ENCODE measurements at regions of chr21 and their contacts with region 1.

Region 1: DNA sequence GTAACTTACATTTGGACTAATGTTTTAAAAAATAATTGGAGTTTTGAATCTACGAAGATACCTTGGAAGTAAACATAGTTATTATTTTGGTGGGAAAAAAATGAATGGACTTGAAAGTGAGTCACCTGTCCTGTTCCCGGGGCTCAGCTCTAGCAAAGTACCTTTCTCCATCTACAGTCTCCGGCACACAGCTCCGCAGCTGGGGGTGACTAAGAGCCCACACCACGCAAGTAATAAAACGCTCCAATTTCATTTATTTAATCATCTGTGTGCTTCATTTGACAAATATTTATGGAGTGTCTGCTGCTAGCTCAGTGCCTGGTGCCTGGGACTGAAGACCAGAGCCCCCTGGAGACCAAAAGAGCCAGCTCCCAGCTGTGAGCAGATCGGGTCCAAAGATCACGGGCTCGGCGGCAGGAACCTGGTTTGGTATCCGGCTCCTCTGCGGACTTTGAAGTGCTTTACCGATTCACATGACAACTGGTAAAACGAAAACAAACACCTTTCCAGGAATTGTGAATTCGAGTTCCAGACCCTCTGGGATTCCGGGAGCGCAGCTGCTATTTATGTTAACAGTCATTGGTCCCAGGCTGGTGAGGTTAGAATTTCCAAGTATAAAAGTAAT is 1.7 kb upstream of the RIPK4 start:
- DNase-seq: peak; percentile 97
- ATAC-seq: peak; percentile 67
- H3K4me3 ChIP-seq: peak overlapping the region; percentile 94
- H3K27ac ChIP-seq: peak overlapping the region; percentile 97
- H3K4me1 ChIP-seq: peaks cover 29% of the 10 kb centered on the region
- H3K27me3 ChIP-seq: no peaks in the 10 kb centered on the region
- CTCF ChIP-seq: peak; percentile 75

Region 2: GRCh38 chr21:41507496-41508299 is 260.9 kb before region 1 on chr21 and contains the start of gene TMPRSS2:
- CTCF ChIA-PET with region 1: no interaction called
- POLR2A ChIA-PET with region 1: no interaction called
- intact Hi-C with region 1: loop called (anchors 5 kb)
- DNase-seq: peak; percentile 68
- ATAC-seq: peak; percentile 80
- H3K4me3 ChIP-seq: peak within 1 kb of the TSS; percentile 83
- H3K27ac ChIP-seq: peak within 1 kb of the TSS; percentile 12; the same call in 1 of the 2 replicates
- H3K4me1 ChIP-seq: peaks cover 24% of the 10 kb centered on the region
- H3K27me3 ChIP-seq: no peaks in the 10 kb centered on the region
- CTCF ChIP-seq: no peak
- total RNA-seq, gene TMPRSS2: 9.3 and 15.8 TPM in 2 replicates

Region 3: DNA sequence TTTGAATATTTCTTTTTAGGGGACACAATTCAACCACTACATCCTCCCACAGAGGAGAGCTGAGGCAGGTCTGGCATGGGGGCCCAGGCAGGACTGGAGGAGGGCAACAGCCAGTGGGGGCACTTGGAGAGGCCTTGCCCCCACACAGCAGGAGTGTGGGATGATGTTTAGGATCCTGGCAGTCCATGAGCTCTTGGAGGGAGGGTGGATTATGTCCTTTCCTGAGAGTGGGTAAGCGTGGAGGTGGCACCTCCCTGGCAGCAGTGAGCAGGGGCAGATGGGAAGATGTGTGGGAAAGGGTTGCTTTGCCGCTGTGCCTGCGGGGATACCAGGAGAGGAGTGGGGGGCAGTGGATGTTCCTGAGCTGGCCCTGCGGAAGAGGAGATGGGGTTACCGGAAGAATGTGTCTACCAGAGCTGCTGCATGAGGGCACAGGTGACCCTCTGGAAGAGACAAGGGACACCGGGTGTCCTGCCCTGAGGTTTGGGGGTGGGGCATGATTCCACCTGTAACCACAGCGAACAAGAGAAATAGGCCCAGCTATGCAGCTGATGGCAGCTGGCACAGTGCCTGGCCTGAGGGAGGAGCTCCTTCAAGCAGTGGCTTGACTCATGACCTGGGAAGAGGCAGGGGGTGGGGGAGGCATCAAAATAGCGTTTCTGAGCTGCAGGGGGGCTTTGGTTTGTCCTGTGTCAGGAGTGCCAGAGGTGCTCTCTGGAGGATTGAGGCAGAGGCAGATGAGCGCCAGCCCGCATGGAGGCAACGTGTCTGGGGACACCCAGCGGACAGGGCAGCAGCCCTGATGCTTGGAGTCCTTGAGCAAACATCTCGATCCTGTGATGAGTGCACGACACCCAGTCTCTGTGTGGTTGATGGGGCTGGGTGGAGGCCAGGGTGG is 136.7 kb before region 1 on chr21:
- CTCF ChIA-PET with region 1: no interaction called
- POLR2A ChIA-PET with region 1: interaction called, 19 read pairs
- intact Hi-C with region 1: loop called (anchors 2 kb)
- DNase-seq: peak; percentile 96
- ATAC-seq: peak; percentile 35
- H3K4me3 ChIP-seq: peak overlapping the region; percentile 22; the same call in 1 of the 2 replicates
- H3K27ac ChIP-seq: peak overlapping the region; percentile 99
- H3K4me1 ChIP-seq: peaks cover 75% of the 10 kb centered on the region
- H3K27me3 ChIP-seq: no peaks in the 10 kb centered on the region
- CTCF ChIP-seq: no peak

Region 4: DNA sequence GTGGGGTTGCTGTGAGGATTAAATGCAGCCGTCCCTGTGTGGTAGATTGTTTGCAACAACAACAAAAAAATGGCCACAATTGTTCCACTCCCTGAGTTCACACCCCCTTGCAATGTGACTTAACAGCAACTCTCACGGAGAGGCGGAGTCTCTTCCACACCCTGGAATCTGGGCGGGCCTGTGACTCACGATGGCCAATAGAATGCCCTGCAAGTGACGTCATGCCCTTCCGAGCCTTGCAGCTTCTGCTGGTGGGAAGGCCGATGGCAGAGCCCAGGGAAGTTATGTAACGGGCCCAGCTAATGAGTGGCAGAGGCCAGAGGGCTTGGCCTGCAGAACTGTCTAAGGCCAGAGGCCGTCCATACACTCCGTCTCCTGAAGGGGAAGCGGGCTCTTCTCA is 89.6 kb before region 1 on chr21:
- CTCF ChIA-PET with region 1: interaction called, 4 read pairs
- POLR2A ChIA-PET with region 1: interaction called, 10 read pairs
- intact Hi-C with region 1: loop called (anchors 1 kb)
- DNase-seq: peak; percentile 99
- ATAC-seq: peak; percentile 75
- H3K4me3 ChIP-seq: peak overlapping the region; percentile 59
- H3K27ac ChIP-seq: peak overlapping the region; percentile 98
- H3K4me1 ChIP-seq: peaks cover 69% of the 10 kb centered on the region
- H3K27me3 ChIP-seq: no peaks in the 10 kb centered on the region
- CTCF ChIP-seq: no peak

Region 5: DNA sequence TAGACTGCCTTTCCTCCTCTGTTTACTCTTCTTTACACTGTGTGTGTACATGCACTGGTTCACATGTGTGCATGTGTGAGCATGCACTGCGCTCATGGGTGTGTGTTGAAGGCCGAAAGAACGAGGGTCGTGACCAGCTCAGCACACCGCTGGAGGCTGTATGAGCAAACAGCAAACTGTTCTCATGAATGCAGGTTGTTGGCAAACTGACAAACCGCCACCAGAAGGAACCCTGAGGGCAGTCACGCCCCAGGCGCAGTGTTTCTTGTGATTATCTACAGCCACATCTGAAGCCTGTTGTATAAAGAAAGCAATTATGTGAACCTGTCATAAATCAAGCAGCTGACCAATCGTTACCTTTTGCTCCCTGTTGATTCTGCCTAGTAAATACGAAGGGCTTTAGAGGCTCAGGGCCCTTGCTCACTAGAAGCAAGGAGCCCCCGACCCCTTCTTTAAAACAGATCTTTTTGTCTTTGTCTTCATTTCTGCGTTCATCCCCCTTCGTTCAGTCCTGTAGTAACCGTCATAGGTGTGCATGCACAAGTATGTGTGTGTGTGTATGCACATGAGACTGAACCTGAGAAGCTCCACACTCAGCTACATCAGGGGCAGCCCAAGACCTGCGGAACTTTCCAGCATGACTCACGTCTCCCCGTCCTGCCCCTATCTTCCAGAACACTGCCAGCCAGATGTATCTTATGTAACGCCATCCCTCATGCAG is 15.1 kb after region 1 on chr21:
- CTCF ChIA-PET with region 1: interaction called, 10 read pairs
- POLR2A ChIA-PET with region 1: interaction called, 12 read pairs
- intact Hi-C with region 1: loop called (anchors 1 kb)
- DNase-seq: peak; percentile 100
- ATAC-seq: peak; percentile 66
- H3K4me3 ChIP-seq: peak overlapping the region; percentile 8; the same call in 1 of the 2 replicates
- H3K27ac ChIP-seq: peak overlapping the region; percentile 97
- H3K4me1 ChIP-seq: peaks cover 89% of the 10 kb centered on the region
- H3K27me3 ChIP-seq: no peaks in the 10 kb centered on the region
- CTCF ChIP-seq: no peak

Region 6: GRCh38 chr21:41933313-41934086 is 165.0 kb after region 1 on chr21:
- CTCF ChIA-PET with region 1: no interaction called
- POLR2A ChIA-PET with region 1: interaction called, 11 read pairs
- intact Hi-C with region 1: loop called (anchors 10 kb)
- DNase-seq: peak; percentile 85
- ATAC-seq: peak; percentile 63
- H3K4me3 ChIP-seq: peak overlapping the region; percentile 63
- H3K27ac ChIP-seq: peak overlapping the region; percentile 90
- H3K4me1 ChIP-seq: peaks cover 42% of the 10 kb centered on the region
- H3K27me3 ChIP-seq: no peaks in the 10 kb centered on the region
- CTCF ChIP-seq: peak; percentile 70

Measured in PC-3 (cell line).